CD4-positive, alpha-beta T cell (primary cell): ENCODE measurements at regions of chr12 and their contacts with region 1.

Region 1: GRCh38 chr12:71663561-71664294 is at the start of gene ZFC3H1:
- DNase-seq: peak; percentile 80 to 99 (median 85)
- ATAC-seq: peak; percentile 77
- H3K4me3 ChIP-seq: peak within 1 kb of the TSS; percentile 91
- H3K4me3 Mint-ChIP-seq: peak within 1 kb of the TSS; percentile 99
- H3K27ac ChIP-seq: peak within 1 kb of the TSS; percentile 98
- H3K27ac Mint-ChIP-seq: peak within 1 kb of the TSS; percentile 97
- H3K4me1 ChIP-seq: peaks cover 17% of the 10 kb centered on the region
- H3K4me1 Mint-ChIP-seq: peaks cover 58% of the 10 kb centered on the region
- H3K27me3 ChIP-seq: no peaks in the 10 kb centered on the region
- H3K27me3 Mint-ChIP-seq: no peaks in the 10 kb centered on the region
- CTCF ChIP-seq: no peak
- total RNA-seq, gene ZFC3H1: 131 to 135 TPM

Region 2: GRCh38 chr12:71503579-71504391 is 159.9 kb before region 1 on chr12:
- CTCF ChIA-PET with region 1: no interaction called
- POLR2A ChIA-PET with region 1: no interaction called
- intact Hi-C with region 1: no loop called
- DNase-seq: peak in 5 of 14 experiments; percentile 0 to 7 (median 3)
- ATAC-seq: no peak
- H3K4me3 ChIP-seq: no peak overlapping the region
- H3K4me3 Mint-ChIP-seq: peak overlapping the region; percentile 0
- H3K27ac ChIP-seq: no peak overlapping the region
- H3K27ac Mint-ChIP-seq: peak overlapping the region; percentile 68
- H3K4me1 ChIP-seq: no peaks in the 10 kb centered on the region
- H3K4me1 Mint-ChIP-seq: peaks cover 14% of the 10 kb centered on the region
- H3K27me3 ChIP-seq: no peaks in the 10 kb centered on the region
- H3K27me3 Mint-ChIP-seq: no peaks in the 10 kb centered on the region
- CTCF ChIP-seq: no peak

Region 3: DNA sequence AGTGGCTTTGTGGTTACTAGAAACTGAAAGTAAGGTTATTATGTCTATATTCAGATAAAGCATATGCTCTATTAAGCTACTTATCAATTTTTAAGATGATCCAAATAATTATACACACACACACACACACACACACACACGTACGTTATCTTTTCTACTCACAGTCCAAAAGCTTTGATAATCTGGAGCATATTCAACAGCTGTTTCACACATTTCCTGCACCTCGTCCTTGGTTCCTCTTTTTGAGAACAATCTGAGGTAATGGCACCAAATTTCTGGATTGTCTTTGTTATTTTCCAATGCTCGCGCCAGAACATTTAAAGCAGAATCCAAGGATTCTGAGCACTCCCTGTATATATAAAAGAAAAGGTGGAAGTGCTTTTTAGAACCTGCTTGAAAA is 37.6 kb before region 1 on chr12:
- CTCF ChIA-PET with region 1: no interaction called
- POLR2A ChIA-PET with region 1: interaction called, 16 read pairs
- intact Hi-C with region 1: loop called in 1 of 2 experiments (anchors 5 kb)
- DNase-seq: peak in 2 of 14 experiments; percentile 3 to 9
- ATAC-seq: no peak
- H3K4me3 ChIP-seq: no peak overlapping the region
- H3K4me3 Mint-ChIP-seq: no peak overlapping the region
- H3K27ac ChIP-seq: no peak overlapping the region
- H3K27ac Mint-ChIP-seq: peak overlapping the region; percentile 34
- H3K4me1 ChIP-seq: no peaks in the 10 kb centered on the region
- H3K4me1 Mint-ChIP-seq: peaks cover 28% of the 10 kb centered on the region
- H3K27me3 ChIP-seq: no peaks in the 10 kb centered on the region
- H3K27me3 Mint-ChIP-seq: no peaks in the 10 kb centered on the region
- CTCF ChIP-seq: no peak

Region 4: DNA sequence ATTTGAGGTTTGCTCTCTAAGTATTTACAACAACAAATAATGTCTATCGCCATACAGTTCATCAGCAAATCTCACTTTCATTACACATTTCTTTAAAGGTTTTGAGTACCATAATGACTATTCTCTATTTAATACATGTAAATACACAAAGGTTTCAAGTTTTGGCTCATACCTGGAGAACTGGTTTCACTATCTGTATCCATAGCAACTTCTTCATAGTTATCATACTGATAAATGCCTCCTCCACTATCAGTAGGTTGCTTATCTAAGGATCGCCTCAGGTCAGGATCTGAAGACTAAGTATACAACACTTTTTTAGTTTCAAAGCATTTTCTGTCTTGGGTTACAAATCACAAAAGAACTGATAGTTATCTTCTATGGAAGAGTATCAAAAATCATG is 21.5 kb before region 1 on chr12:
- CTCF ChIA-PET with region 1: interaction called, 14 read pairs
- POLR2A ChIA-PET with region 1: interaction called, 28 read pairs
- intact Hi-C with region 1: loop called in 1 of 2 experiments (anchors 2 kb)
- DNase-seq: no peak
- ATAC-seq: no peak
- H3K4me3 ChIP-seq: no peak overlapping the region
- H3K4me3 Mint-ChIP-seq: no peak overlapping the region
- H3K27ac ChIP-seq: no peak overlapping the region
- H3K27ac Mint-ChIP-seq: peak overlapping the region; percentile 55
- H3K4me1 ChIP-seq: peaks cover 3% of the 10 kb centered on the region
- H3K4me1 Mint-ChIP-seq: peaks cover 53% of the 10 kb centered on the region
- H3K27me3 ChIP-seq: no peaks in the 10 kb centered on the region
- H3K27me3 Mint-ChIP-seq: no peaks in the 10 kb centered on the region
- CTCF ChIP-seq: no peak

Region 5: GRCh38 chr12:71685914-71686665 is 22.4 kb after region 1 on chr12 and contains the start of gene TMEM19:
- CTCF ChIA-PET with region 1: interaction called, 52 read pairs
- POLR2A ChIA-PET with region 1: interaction called, 312 read pairs
- intact Hi-C with region 1: loop called (anchors 1 kb)
- DNase-seq: peak; percentile 64 to 91 (median 79)
- ATAC-seq: peak; percentile 90
- H3K4me3 ChIP-seq: peak within 1 kb of the TSS; percentile 77
- H3K4me3 Mint-ChIP-seq: peak within 1 kb of the TSS; percentile 92
- H3K27ac ChIP-seq: peak within 1 kb of the TSS; percentile 69 to 78
- H3K27ac Mint-ChIP-seq: peak within 1 kb of the TSS; percentile 87
- H3K4me1 ChIP-seq: peaks cover 20% of the 10 kb centered on the region
- H3K4me1 Mint-ChIP-seq: peaks cover 47% of the 10 kb centered on the region
- H3K27me3 ChIP-seq: no peaks in the 10 kb centered on the region
- H3K27me3 Mint-ChIP-seq: no peaks in the 10 kb centered on the region
- CTCF ChIP-seq: no peak
- total RNA-seq, gene TMEM19: 8.9 to 11.6 TPM

Region 6: DNA sequence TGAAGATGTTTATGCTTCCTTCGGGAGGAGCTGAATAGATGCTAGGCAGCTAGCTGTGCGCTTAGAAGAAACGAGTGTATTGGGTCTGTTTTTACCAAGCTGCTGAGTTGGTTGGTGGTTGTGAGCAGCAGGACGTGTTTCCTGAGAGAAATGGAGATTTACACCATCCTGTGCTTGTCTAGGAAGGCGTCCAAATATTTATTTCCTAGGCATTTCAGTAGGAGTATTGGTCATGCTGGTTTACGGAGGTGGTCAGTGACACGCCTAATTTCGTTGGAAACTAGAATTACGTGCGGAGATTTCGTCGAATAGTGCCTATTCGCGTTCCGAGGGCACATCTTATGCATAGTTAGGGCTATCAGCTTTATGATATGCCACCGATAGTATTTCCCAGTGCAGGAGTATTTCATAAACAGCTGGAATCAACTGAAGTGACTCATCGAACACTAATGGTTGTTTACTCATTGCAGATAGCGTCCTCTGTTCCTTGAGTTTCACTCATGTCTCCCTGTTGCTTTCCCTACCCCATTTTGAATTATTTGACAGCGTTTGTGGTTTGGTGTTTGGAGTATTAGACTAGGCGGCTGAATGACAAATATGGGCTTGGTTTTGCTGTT is 176.6 kb after region 1 on chr12:
- CTCF ChIA-PET with region 1: no interaction called
- POLR2A ChIA-PET with region 1: interaction called, 53 read pairs
- intact Hi-C with region 1: loop called (anchors 2 to 5 kb)
- DNase-seq: peak in 7 of 14 experiments; percentile 8 to 58 (median 27)
- ATAC-seq: peak; percentile 20
- H3K4me3 ChIP-seq: peak overlapping the region; percentile 75
- H3K4me3 Mint-ChIP-seq: peak overlapping the region; percentile 97
- H3K27ac ChIP-seq: peak overlapping the region; percentile 97 to 99
- H3K27ac Mint-ChIP-seq: peak overlapping the region; percentile 95
- H3K4me1 ChIP-seq: peaks cover 24% of the 10 kb centered on the region
- H3K4me1 Mint-ChIP-seq: peaks cover 45% of the 10 kb centered on the region
- H3K27me3 ChIP-seq: no peaks in the 10 kb centered on the region
- H3K27me3 Mint-ChIP-seq: peaks cover under 1% of the 10 kb centered on the region
- CTCF ChIP-seq: no peak